Mammary epithelial cell (primary cell): ENCODE measurements at regions of chr1 and their contacts with region 1.

Region 1: GRCh38 chr1:9689011-9689706 is 37.6 kb downstream of the PIK3CD start:
- DNase-seq: peak; percentile 66
- H3K4me3 ChIP-seq: peak overlapping the region; percentile 48 to 62 (median 53)
- H3K27ac ChIP-seq: peak overlapping the region; percentile 18
- H3K4me1 ChIP-seq: peaks cover 39% of the 10 kb centered on the region
- H3K27me3 ChIP-seq: no peaks in the 10 kb centered on the region
- CTCF ChIP-seq: no peak

Region 2: GRCh38 chr1:9588551-9589143 is 100.5 kb before region 1 on chr1 and contains the start of gene TMEM201:
- CTCF ChIA-PET with region 1: no interaction called
- dilution Hi-C with region 1: no loop called
- in situ Hi-C with region 1: no loop called
- intact Hi-C with region 1: no loop called
- DNase-seq: peak; percentile 89
- H3K4me3 ChIP-seq: peak within 1 kb of the TSS; percentile 58 to 72 (median 64)
- H3K27ac ChIP-seq: peak within 1 kb of the TSS; percentile 61
- H3K4me1 ChIP-seq: peaks cover 26% of the 10 kb centered on the region
- H3K27me3 ChIP-seq: no peaks in the 10 kb centered on the region
- CTCF ChIP-seq: peak; percentile 37 to 64
- total RNA-seq, gene TMEM201: 6.8 to 15.9 TPM

Region 3: GRCh38 chr1:9671377-9672140 is 17.6 kb before region 1 on chr1:
- CTCF ChIA-PET with region 1: no interaction called
- dilution Hi-C with region 1: no loop called
- in situ Hi-C with region 1: no loop called
- intact Hi-C with region 1: loop called (anchors 2 kb)
- DNase-seq: peak; percentile 85
- H3K4me3 ChIP-seq: no peak overlapping the region
- H3K27ac ChIP-seq: no peak overlapping the region
- H3K4me1 ChIP-seq: peaks cover 5% of the 10 kb centered on the region
- H3K27me3 ChIP-seq: no peaks in the 10 kb centered on the region
- CTCF ChIP-seq: no peak

Region 4: GRCh38 chr1:9717193-9718005 is 28.2 kb after region 1 on chr1:
- CTCF ChIA-PET with region 1: no interaction called
- dilution Hi-C with region 1: no loop called
- in situ Hi-C with region 1: no loop called
- intact Hi-C with region 1: loop called (anchors 1 kb)
- DNase-seq: no peak
- H3K4me3 ChIP-seq: no peak overlapping the region
- H3K27ac ChIP-seq: no peak overlapping the region
- H3K4me1 ChIP-seq: peaks cover 53% of the 10 kb centered on the region
- H3K27me3 ChIP-seq: no peaks in the 10 kb centered on the region
- CTCF ChIP-seq: no peak